Left ventricle myocardium inferior (tissue), 1 donor: ENCODE measurements at regions of chr17 and their contacts with region 1.

Region 1: DNA sequence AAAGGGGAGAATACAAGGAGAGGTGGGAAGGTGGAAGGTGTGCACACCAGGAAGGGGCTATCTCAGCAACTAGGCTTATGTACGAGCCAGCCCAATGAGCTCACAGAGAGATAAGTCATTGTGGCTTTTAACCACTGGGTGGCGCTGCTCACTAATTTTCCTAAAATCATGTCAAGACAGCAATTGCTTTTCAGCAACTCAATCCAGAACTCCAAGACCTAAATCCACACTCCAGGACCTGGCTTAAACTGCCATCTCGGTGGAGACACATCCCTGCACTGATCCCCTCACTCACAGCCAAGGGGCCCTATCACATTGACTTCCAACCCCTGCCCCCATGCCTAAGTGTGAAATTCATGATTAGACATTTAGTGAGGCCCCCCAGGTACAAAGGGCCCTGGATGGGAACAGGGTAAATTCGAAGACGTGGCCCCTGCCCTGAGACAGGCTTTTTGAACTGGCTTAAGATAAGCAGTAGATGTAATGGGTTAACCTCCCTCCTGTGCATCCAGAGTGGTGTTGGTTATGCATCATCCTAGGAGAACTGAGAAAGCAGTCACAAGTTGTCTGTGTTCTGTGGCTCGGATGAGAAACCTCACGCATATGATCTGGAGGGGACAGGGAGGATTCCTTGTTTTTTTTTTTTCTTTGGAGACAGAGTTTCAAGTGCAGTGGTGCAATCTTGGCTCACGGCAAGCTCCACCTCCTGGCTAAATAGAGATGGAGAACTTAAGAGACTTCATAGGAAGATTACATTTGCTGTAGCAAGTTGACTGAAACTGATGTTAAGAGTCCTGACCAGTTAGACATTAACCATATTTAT is 11.5 kb downstream of the CCL16 start:
- DNase-seq: peak; percentile 42
- H3K4me3 ChIP-seq: no peak overlapping the region
- H3K27ac ChIP-seq: no peak overlapping the region
- H3K4me1 ChIP-seq: peaks cover 25% of the 10 kb centered on the region
- H3K27me3 ChIP-seq: no peaks in the 10 kb centered on the region
- CTCF ChIP-seq: peak; percentile 85

Region 2: GRCh38 chr17:36144014-36144413 is 174.2 kb after region 1 on chr17:
- intact Hi-C with region 1: loop called (anchors 5 kb)
- DNase-seq: no peak
- H3K4me3 ChIP-seq: no peak overlapping the region
- H3K27ac ChIP-seq: no peak overlapping the region
- H3K4me1 ChIP-seq: no peaks in the 10 kb centered on the region
- H3K27me3 ChIP-seq: peaks cover 11% of the 10 kb centered on the region
- CTCF ChIP-seq: no peak

Region 3: GRCh38 chr17:36486204-36487194 is 516.7 kb after region 1 on chr17 and contains the start of gene ZNHIT3:
- intact Hi-C with region 1: loop called (anchors 10 kb)
- DNase-seq: peak; percentile 91
- H3K4me3 ChIP-seq: peak within 1 kb of the TSS; percentile 96
- H3K27ac ChIP-seq: peak within 1 kb of the TSS; percentile 88
- H3K4me1 ChIP-seq: peaks cover 53% of the 10 kb centered on the region
- H3K27me3 ChIP-seq: peaks cover 12% of the 10 kb centered on the region
- CTCF ChIP-seq: no peak
- total RNA-seq, gene ZNHIT3: 22.9 TPM